Caco-2 (cell line): ENCODE measurements at regions of chr6 and their contacts with region 1.

Region 1: DNA sequence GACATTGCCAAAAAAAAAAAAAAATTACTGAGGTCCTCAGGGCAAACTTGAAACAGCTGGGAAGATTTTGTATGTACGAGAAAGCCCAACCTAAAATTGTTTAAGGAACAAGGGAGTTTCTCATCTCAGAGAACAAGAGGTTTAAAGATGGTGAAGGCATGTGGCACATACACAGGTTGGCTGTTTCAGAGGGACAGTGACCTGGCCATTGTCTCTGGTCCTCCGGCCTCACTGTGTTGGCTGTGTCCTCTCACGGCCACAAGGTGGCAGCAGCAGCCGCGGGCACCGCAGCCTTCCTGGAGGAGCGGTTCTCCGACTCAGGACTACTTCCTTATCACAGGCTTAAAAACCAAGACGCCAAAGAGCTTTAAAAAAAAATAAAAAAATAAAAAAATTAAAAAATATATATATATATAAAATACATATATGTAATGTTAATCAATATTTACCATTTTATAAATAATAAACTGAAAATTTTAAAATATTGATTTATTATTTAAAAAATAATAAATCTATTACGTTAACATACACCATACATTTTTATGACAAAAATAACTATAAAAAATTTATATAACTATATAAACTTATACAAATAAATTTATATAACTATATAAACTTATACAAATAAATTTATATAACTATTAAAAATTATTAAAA is 52.8 kb downstream of the GTF2H5 start:
- DNase-seq: peak; percentile 80 to 87
- H3K4me3 ChIP-seq: no peak overlapping the region
- H3K4me3 Mint-ChIP-seq: no peak overlapping the region
- H3K27ac Mint-ChIP-seq: no peak overlapping the region
- H3K4me1 ChIP-seq: no peaks in the 10 kb centered on the region
- H3K4me1 Mint-ChIP-seq: no peaks in the 10 kb centered on the region
- H3K27me3 ChIP-seq: no peaks in the 10 kb centered on the region
- H3K27me3 Mint-ChIP-seq: no peaks in the 10 kb centered on the region
- CTCF ChIP-seq: peak; percentile 91 to 96

Region 2: DNA sequence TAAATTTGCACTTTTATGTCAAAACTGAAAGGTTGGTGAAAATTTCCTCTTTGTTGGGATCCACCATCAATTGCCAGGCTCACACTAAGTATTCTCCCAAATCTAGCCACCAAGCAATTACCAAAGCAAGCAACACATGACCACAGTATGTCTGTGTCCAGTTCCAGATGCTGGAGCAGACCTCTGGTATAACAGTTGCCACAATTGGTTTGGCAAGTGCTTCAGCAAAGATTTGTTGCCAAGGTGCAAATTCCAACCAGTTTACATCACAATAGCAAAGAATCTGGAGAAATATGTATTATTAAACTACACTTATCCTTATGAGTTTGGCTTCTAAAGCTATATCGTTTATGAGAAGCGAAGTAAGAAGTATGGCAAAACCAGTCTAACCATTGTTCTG is 46.4 kb before region 1 on chr6:
- CTCF ChIA-PET with region 1: no interaction called
- POLR2A ChIA-PET with region 1: no interaction called
- intact Hi-C with region 1: no loop called
- DNase-seq: no peak
- H3K4me3 ChIP-seq: no peak overlapping the region
- H3K4me3 Mint-ChIP-seq: no peak overlapping the region
- H3K27ac Mint-ChIP-seq: no peak overlapping the region
- H3K4me1 ChIP-seq: peaks cover 7% of the 10 kb centered on the region; the same call in 1 of the 2 replicates
- H3K4me1 Mint-ChIP-seq: peaks cover 7% of the 10 kb centered on the region
- H3K27me3 ChIP-seq: no peaks in the 10 kb centered on the region
- H3K27me3 Mint-ChIP-seq: no peaks in the 10 kb centered on the region
- CTCF ChIP-seq: no peak

Region 3: DNA sequence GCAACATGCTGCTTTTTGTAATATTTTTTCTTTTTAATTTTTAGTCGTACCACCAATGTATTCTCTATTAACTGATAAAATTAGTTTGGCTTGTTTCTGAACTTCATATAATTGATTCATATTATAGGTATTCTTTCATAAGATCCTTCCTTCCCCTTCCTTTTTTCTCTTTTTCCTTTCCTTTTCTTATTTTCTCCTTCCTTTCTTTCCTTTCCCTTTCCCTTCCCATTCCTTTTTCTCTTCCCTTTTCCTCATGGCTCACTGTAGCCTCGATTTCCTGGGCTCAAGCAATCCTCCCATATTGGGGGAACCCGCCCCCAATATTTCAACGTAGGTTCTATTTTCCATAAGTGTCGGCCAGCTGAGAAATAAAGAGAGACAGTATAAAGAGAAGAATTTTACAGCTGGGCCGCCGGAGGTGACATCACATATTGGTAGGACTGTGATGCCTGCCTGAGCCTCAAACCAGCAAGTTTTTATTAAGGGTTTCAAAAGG is 75.1 kb after region 1 on chr6:
- CTCF ChIA-PET with region 1: no interaction called
- POLR2A ChIA-PET with region 1: no interaction called
- intact Hi-C with region 1: loop called (anchors 2 kb)
- DNase-seq: peak in 1 of 2 experiments; percentile 76
- H3K4me3 ChIP-seq: no peak overlapping the region
- H3K4me3 Mint-ChIP-seq: peak overlapping the region; percentile 50
- H3K27ac Mint-ChIP-seq: peak overlapping the region; percentile 88
- H3K4me1 ChIP-seq: peaks cover 30% of the 10 kb centered on the region
- H3K4me1 Mint-ChIP-seq: peaks cover 21% of the 10 kb centered on the region
- H3K27me3 ChIP-seq: no peaks in the 10 kb centered on the region
- H3K27me3 Mint-ChIP-seq: no peaks in the 10 kb centered on the region
- CTCF ChIP-seq: no peak

Region 4: GRCh38 chr6:158387036-158387435 is 166.1 kb after region 1 on chr6:
- CTCF ChIA-PET with region 1: interaction called, 7 read pairs
- POLR2A ChIA-PET with region 1: no interaction called
- intact Hi-C with region 1: loop called (anchors 1 kb)
- DNase-seq: no peak
- H3K4me3 ChIP-seq: no peak overlapping the region
- H3K4me3 Mint-ChIP-seq: no peak overlapping the region
- H3K27ac Mint-ChIP-seq: no peak overlapping the region
- H3K4me1 ChIP-seq: no peaks in the 10 kb centered on the region
- H3K4me1 Mint-ChIP-seq: peaks cover 8% of the 10 kb centered on the region
- H3K27me3 ChIP-seq: no peaks in the 10 kb centered on the region
- H3K27me3 Mint-ChIP-seq: no peaks in the 10 kb centered on the region
- CTCF ChIP-seq: peak; percentile 17 to 28

Region 5: DNA sequence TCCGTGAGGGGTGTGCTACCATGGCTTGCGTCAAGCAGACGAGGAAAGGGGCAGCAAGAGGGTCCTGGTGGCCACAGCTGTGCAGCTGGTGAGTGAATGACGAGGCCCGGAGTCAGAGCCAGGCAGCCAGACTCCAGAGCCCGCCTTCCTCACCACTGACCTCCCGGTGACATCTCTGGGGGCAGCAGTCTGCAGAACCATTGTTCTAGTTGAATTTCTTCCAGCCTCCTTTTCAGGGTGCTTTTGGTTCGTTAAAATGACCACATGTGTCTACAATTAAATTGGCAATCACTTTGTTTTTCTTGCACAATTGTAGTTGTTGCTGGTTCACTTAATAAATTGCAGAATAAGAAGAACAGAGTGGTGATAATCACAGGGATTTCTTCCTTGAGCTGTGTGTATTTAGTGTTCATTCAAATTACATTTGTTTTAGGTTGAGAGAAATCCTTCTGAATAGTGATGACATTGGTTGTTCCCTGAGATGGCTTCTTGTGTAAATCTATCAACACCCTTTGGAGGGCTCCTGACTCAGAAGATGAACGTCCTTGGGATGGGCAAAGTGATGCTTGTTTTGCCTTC is 187.7 kb after region 1 on chr6:
- CTCF ChIA-PET with region 1: no interaction called
- POLR2A ChIA-PET with region 1: no interaction called
- intact Hi-C with region 1: no loop called
- DNase-seq: no peak
- H3K4me3 ChIP-seq: no peak overlapping the region
- H3K4me3 Mint-ChIP-seq: no peak overlapping the region
- H3K27ac Mint-ChIP-seq: no peak overlapping the region
- H3K4me1 ChIP-seq: peaks cover 11% of the 10 kb centered on the region; the same call in 1 of the 2 replicates
- H3K4me1 Mint-ChIP-seq: peaks cover 24% of the 10 kb centered on the region
- H3K27me3 ChIP-seq: no peaks in the 10 kb centered on the region
- H3K27me3 Mint-ChIP-seq: no peaks in the 10 kb centered on the region
- CTCF ChIP-seq: no peak

Region 6: DNA sequence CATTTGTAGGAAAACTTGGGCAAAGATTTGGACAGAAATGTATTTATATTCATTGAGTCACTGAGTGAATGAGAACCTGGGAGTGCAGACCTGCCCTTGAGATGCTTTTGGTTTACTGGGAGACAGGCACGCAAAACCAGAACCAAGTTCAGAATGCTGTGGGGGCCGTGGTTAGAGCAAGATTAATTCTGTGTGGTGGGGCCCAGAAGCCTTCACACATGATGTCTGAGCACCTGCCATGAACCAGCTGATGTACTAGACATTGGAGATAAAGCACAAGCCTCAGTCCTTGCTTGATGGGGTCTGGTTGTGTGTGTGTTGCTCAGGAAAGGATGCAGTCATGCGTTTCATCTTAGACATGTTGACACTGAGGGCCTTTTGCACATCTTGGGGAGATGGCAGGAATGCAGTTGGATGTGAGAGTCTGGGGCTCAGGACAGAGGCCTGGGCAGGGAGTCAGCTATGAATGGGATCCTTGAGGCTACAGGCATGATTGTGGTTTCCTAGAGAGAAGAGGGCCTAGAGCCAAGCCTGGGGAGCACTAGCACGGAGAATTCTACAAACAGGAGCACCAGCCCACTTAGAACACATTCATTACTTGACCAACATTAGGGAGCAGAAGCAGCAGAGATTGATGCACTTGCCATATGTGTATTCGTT is 224.6 kb after region 1 on chr6:
- CTCF ChIA-PET with region 1: no interaction called
- POLR2A ChIA-PET with region 1: no interaction called
- intact Hi-C with region 1: no loop called
- DNase-seq: no peak
- H3K4me3 ChIP-seq: no peak overlapping the region
- H3K4me3 Mint-ChIP-seq: no peak overlapping the region
- H3K27ac Mint-ChIP-seq: no peak overlapping the region
- H3K4me1 ChIP-seq: no peaks in the 10 kb centered on the region
- H3K4me1 Mint-ChIP-seq: no peaks in the 10 kb centered on the region
- H3K27me3 ChIP-seq: no peaks in the 10 kb centered on the region
- H3K27me3 Mint-ChIP-seq: no peaks in the 10 kb centered on the region
- CTCF ChIP-seq: no peak

Region 7: GRCh38 chr6:158496700-158497099 is 275.8 kb after region 1 on chr6:
- CTCF ChIA-PET with region 1: no interaction called
- POLR2A ChIA-PET with region 1: no interaction called
- intact Hi-C with region 1: loop called (anchors 5 kb)
- DNase-seq: no peak
- H3K4me3 ChIP-seq: no peak overlapping the region
- H3K4me3 Mint-ChIP-seq: no peak overlapping the region
- H3K27ac Mint-ChIP-seq: no peak overlapping the region
- H3K4me1 ChIP-seq: no peaks in the 10 kb centered on the region
- H3K4me1 Mint-ChIP-seq: no peaks in the 10 kb centered on the region
- H3K27me3 ChIP-seq: no peaks in the 10 kb centered on the region
- H3K27me3 Mint-ChIP-seq: no peaks in the 10 kb centered on the region
- CTCF ChIP-seq: no peak

Region 8: GRCh38 chr6:158518191-158519127 is 297.5 kb after region 1 on chr6:
- CTCF ChIA-PET with region 1: interaction called, 4 read pairs
- POLR2A ChIA-PET with region 1: no interaction called
- intact Hi-C with region 1: loop called (anchors 1 kb)
- DNase-seq: peak; percentile 70 to 73
- H3K4me3 ChIP-seq: peak overlapping the region; percentile 11
- H3K4me3 Mint-ChIP-seq: peak overlapping the region; percentile 73
- H3K27ac Mint-ChIP-seq: no peak overlapping the region
- H3K4me1 ChIP-seq: no peaks in the 10 kb centered on the region
- H3K4me1 Mint-ChIP-seq: peaks cover 6% of the 10 kb centered on the region
- H3K27me3 ChIP-seq: no peaks in the 10 kb centered on the region
- H3K27me3 Mint-ChIP-seq: no peaks in the 10 kb centered on the region
- CTCF ChIP-seq: peak in 1 of 2 experiments; percentile 68

Region 9: GRCh38 chr6:158536084-158536890 is 315.4 kb after region 1 on chr6:
- CTCF ChIA-PET with region 1: no interaction called
- POLR2A ChIA-PET with region 1: no interaction called
- intact Hi-C with region 1: loop called (anchors 1 kb)
- DNase-seq: peak; percentile 85 to 90
- H3K4me3 ChIP-seq: peak overlapping the region; percentile 88
- H3K4me3 Mint-ChIP-seq: peak overlapping the region; percentile 67
- H3K27ac Mint-ChIP-seq: no peak overlapping the region
- H3K4me1 ChIP-seq: no peaks in the 10 kb centered on the region
- H3K4me1 Mint-ChIP-seq: no peaks in the 10 kb centered on the region
- H3K27me3 ChIP-seq: no peaks in the 10 kb centered on the region
- H3K27me3 Mint-ChIP-seq: peaks cover 6% of the 10 kb centered on the region
- CTCF ChIP-seq: no peak

Region 10: GRCh38 chr6:158559895-158560835 is 339.3 kb after region 1 on chr6 and contains the start of gene TMEM181:
- CTCF ChIA-PET with region 1: no interaction called
- POLR2A ChIA-PET with region 1: no interaction called
- intact Hi-C with region 1: loop called (anchors 1 kb)
- DNase-seq: peak; percentile 83 to 87
- H3K4me3 ChIP-seq: peak within 1 kb of the TSS; percentile 91
- H3K4me3 Mint-ChIP-seq: peak within 1 kb of the TSS; percentile 92
- H3K27ac Mint-ChIP-seq: peak within 1 kb of the TSS; percentile 88
- H3K4me1 ChIP-seq: no peaks in the 10 kb centered on the region
- H3K4me1 Mint-ChIP-seq: peaks cover 8% of the 10 kb centered on the region
- H3K27me3 ChIP-seq: no peaks in the 10 kb centered on the region
- H3K27me3 Mint-ChIP-seq: no peaks in the 10 kb centered on the region
- CTCF ChIP-seq: no peak
- total RNA-seq, gene TMEM181: 25.7 and 26.7 TPM in 2 replicates